ENCODE measurements at regions of chr15 and their contacts with region 1.

Region 1: DNA sequence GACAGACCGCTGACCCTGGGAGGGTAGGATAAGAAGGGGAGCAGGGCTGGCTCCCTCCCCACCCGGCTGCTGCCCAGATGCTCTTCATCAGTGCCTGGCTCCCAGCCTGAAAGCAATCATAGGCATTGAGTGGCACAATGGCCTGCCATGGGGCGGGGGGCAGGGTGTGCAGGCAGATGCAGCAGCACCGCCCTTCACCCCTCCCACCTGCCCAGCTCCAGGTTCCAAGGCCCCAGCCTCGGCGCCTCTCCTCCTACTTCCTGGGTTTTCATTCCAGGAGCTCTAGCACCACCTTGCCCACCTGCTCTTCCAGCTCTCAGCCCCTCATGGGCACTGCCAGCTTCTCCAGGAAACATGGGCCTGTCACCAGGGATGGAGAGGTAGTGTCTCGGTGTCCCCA is 101.7 kb downstream of the MEGF11 start:
- DNase-seq: peak; percentile 66
- ATAC-seq: peak; percentile 89
- H3K4me3 Mint-ChIP-seq: no peak overlapping the region
- H3K27ac Mint-ChIP-seq: no peak overlapping the region
- H3K4me1 Mint-ChIP-seq: peaks cover 14% of the 10 kb centered on the region
- H3K27me3 Mint-ChIP-seq: no peaks in the 10 kb centered on the region
- CTCF ChIP-seq: no peak

Region 2: DNA sequence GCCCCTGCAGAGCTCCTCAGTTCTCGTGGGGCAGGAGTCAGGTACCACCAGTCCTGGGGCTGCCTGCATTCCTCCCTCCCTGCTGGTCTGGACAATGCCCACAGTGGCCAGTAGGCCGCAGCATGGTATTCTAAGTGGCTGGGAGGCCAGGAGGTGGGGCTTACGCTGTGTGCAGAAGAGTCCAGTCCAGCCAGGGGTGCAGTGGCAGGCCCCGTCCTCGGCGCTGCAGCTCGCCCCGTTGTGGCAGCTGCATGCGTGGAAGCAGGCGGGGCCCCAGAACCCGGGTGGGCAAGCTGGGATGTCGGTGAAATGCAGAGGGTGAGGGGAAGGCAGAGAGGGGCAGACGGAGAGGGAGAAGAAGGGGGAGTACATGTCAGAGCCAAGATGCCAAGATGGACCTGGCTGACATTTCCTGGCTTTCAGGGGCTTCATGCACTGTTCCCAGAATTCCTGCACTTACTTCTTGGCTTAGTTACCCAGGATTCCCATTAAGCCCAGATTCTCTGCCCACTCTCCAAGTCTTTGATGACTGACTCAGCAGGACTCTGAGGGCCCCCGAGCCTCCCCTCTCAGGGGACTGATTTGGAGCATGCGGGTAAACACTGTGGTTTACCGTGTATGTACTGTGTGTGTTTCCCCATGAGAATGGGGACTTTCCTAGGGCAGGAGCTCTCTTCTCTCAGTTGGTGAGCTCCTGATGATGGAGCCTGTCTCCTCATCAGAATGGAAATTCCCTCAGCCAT is 235.0 kb before region 1 on chr15:
- CTCF ChIA-PET with region 1: interaction called, 21 read pairs
- POLR2A ChIA-PET with region 1: no interaction called
- DNase-seq: peak; percentile 87
- ATAC-seq: peak; percentile 99
- H3K4me3 Mint-ChIP-seq: no peak overlapping the region
- H3K27ac Mint-ChIP-seq: 0 out of 2 replicates have a peak overlapping the region, but pooled peaks have one; percentile 57
- H3K4me1 Mint-ChIP-seq: peaks cover 18% of the 10 kb centered on the region
- H3K27me3 Mint-ChIP-seq: no peaks in the 10 kb centered on the region
- CTCF ChIP-seq: peak; percentile 37; the same call in 1 of the 2 replicates

Region 3: GRCh38 chr15:66189291-66189690 is 37.5 kb after region 1 on chr15:
- CTCF ChIA-PET with region 1: interaction called, 11 read pairs
- POLR2A ChIA-PET with region 1: no interaction called
- DNase-seq: no peak
- ATAC-seq: no peak
- H3K4me3 Mint-ChIP-seq: no peak overlapping the region
- H3K27ac Mint-ChIP-seq: no peak overlapping the region
- H3K4me1 Mint-ChIP-seq: peaks cover 39% of the 10 kb centered on the region
- H3K27me3 Mint-ChIP-seq: peaks cover 4% of the 10 kb centered on the region
- CTCF ChIP-seq: no peak

Measured in WTC11 (cell line).